ENCODE measurements at regions of chr18 and their contacts with region 1.

Region 1: GRCh38 chr18:62714671-62715435 is 488 bp upstream of the PHLPP1 start:
- DNase-seq: peak; percentile 85
- H3K4me3 Mint-ChIP-seq: peak overlapping the region; percentile 87
- H3K27ac Mint-ChIP-seq: peak overlapping the region; percentile 85
- H3K4me1 Mint-ChIP-seq: peaks cover 35% of the 10 kb centered on the region
- H3K27me3 Mint-ChIP-seq: peaks cover 21% of the 10 kb centered on the region

Region 2: GRCh38 chr18:62505669-62506494 is 209.0 kb before region 1 on chr18:
- intact Hi-C with region 1: loop called (anchors 1 kb)
- DNase-seq: peak; percentile 25
- H3K4me3 Mint-ChIP-seq: peak overlapping the region; percentile 81
- H3K27ac Mint-ChIP-seq: peak overlapping the region; percentile 96
- H3K4me1 Mint-ChIP-seq: peaks cover 23% of the 10 kb centered on the region
- H3K27me3 Mint-ChIP-seq: peaks cover 2% of the 10 kb centered on the region

Region 3: GRCh38 chr18:62610701-62611411 is 104.0 kb before region 1 on chr18:
- intact Hi-C with region 1: no loop called
- DNase-seq: no peak
- H3K4me3 Mint-ChIP-seq: no peak overlapping the region
- H3K27ac Mint-ChIP-seq: no peak overlapping the region
- H3K4me1 Mint-ChIP-seq: no peaks in the 10 kb centered on the region
- H3K27me3 Mint-ChIP-seq: peaks cover 34% of the 10 kb centered on the region

Region 4: DNA sequence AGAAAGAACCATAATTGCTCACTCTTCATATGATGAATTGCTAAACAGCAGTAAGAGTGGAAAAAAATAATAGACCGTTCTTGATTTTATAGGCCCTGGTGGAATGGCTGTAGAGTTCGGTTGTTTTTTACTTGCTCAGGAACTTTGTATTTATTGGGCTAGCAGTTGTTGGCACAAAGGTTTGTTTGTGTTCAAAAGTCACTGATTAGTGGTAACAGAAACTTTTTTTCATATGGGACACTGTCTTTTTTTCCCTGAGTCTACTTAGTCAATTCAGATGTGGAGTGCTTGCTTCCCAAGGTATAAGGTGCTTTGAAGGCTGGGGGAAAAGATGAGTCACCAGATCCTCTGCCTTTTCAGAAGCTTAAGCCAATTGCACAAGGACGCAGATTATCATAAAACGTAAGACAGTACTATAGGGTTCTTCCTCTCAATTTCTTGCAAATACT is 26.3 kb after region 1 on chr18:
- intact Hi-C with region 1: loop called (anchors 1 kb)
- DNase-seq: no peak
- H3K4me3 Mint-ChIP-seq: no peak overlapping the region
- H3K27ac Mint-ChIP-seq: peak overlapping the region; percentile 24
- H3K4me1 Mint-ChIP-seq: peaks cover 10% of the 10 kb centered on the region
- H3K27me3 Mint-ChIP-seq: no peaks in the 10 kb centered on the region

Region 5: DNA sequence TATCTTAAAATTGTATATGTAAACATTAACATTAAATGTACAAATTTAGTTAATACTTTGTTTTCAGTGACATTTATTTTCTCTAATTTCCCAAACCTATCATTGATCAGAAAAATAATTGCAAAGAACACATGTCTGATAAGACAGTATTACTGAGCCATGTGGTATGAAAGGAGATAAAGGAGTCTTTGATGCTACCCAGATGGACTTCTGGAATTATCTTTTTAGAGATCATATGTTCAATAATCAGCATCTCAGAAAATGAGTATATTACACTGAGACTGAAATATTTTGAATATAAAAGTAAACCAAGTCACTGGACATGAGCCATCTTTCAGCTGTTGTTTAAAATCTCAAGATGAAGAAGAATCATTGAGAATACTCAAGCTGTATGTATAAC is 153.8 kb after region 1 on chr18:
- intact Hi-C with region 1: loop called (anchors 1 kb)
- DNase-seq: no peak
- H3K4me3 Mint-ChIP-seq: no peak overlapping the region
- H3K27ac Mint-ChIP-seq: peak overlapping the region; percentile 87
- H3K4me1 Mint-ChIP-seq: peaks cover 38% of the 10 kb centered on the region
- H3K27me3 Mint-ChIP-seq: no peaks in the 10 kb centered on the region

Region 6: DNA sequence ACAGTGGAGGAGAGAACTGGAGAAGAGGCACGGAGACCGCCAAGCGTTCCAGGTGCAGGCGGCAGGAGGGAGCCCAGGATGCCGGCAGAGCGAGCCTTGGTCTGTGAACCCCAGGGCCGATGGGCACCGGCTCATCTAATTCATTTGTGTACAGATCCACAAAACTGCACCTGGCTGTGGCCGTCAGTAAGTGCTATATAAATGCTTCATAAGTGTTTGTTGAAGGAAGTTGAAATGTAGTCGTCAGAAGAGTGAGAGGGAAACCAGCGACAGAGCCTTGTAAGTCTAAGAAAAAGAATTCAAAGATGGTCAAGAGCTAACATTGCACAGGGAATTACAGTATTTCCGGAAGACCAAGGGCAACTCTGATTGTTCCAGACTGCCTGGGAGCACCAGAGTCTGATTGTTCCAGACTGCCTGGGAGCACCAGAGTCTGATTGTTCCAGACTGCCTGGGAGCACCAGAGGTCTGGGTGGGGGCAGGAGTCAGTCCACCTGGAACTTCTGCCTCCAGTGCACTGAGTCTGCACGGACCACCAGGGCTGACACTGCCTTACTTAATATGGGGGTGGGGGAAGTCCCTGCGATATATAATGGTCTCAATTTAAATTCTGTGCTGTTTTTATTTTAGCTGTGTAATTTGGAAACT is 492.4 kb after region 1 on chr18:
- intact Hi-C with region 1: loop called (anchors 10 kb)
- DNase-seq: no peak
- H3K4me3 Mint-ChIP-seq: peak overlapping the region; percentile 87
- H3K27ac Mint-ChIP-seq: peak overlapping the region; percentile 89
- H3K4me1 Mint-ChIP-seq: peaks cover 93% of the 10 kb centered on the region
- H3K27me3 Mint-ChIP-seq: no peaks in the 10 kb centered on the region

Region 7: GRCh38 chr18:63439334-63439733 is 724.5 kb after region 1 on chr18:
- intact Hi-C with region 1: loop called (anchors 1 kb)
- DNase-seq: peak; percentile 19
- H3K4me3 Mint-ChIP-seq: no peak overlapping the region
- H3K27ac Mint-ChIP-seq: no peak overlapping the region
- H3K4me1 Mint-ChIP-seq: peaks cover 6% of the 10 kb centered on the region
- H3K27me3 Mint-ChIP-seq: peaks cover 23% of the 10 kb centered on the region